Naive thymus-derived CD4-positive, alpha-beta T cell (primary cell): ENCODE measurements at regions of chr15 and their contacts with region 1.

Region 1: GRCh38 chr15:83268147-83268546 is 16.3 kb downstream of the BNC1 start:
- DNase-seq: no peak
- ATAC-seq: no peak
- H3K4me3 ChIP-seq: no peak overlapping the region
- H3K4me3 Mint-ChIP-seq: no peak overlapping the region
- H3K27ac ChIP-seq: no peak overlapping the region
- H3K27ac Mint-ChIP-seq: no peak overlapping the region
- H3K4me1 ChIP-seq: no peaks in the 10 kb centered on the region
- H3K4me1 Mint-ChIP-seq: no peaks in the 10 kb centered on the region
- H3K27me3 ChIP-seq: no peaks in the 10 kb centered on the region
- H3K27me3 Mint-ChIP-seq: peaks cover 11 to 45% (median 22%) of the 10 kb centered on the region in 5 donors

Region 2: GRCh38 chr15:82093774-82094211 is 1174.4 kb before region 1 on chr15:
- CTCF ChIA-PET with region 1: no interaction called
- POLR2A ChIA-PET with region 1: no interaction called
- intact Hi-C with region 1: loop called in 1 of 2 experiments (anchors 5 kb)
- DNase-seq: no peak
- ATAC-seq: no peak
- H3K4me3 ChIP-seq: no peak overlapping the region
- H3K4me3 Mint-ChIP-seq: no peak overlapping the region
- H3K27ac ChIP-seq: no peak overlapping the region
- H3K27ac Mint-ChIP-seq: no peak overlapping the region
- H3K4me1 ChIP-seq: no peaks in the 10 kb centered on the region
- H3K4me1 Mint-ChIP-seq: no peaks in the 10 kb centered on the region
- H3K27me3 ChIP-seq: no peaks in the 10 kb centered on the region
- H3K27me3 Mint-ChIP-seq: peaks cover 0 to 2% (median 0%) of the 10 kb centered on the region in 5 donors

Region 3: DNA sequence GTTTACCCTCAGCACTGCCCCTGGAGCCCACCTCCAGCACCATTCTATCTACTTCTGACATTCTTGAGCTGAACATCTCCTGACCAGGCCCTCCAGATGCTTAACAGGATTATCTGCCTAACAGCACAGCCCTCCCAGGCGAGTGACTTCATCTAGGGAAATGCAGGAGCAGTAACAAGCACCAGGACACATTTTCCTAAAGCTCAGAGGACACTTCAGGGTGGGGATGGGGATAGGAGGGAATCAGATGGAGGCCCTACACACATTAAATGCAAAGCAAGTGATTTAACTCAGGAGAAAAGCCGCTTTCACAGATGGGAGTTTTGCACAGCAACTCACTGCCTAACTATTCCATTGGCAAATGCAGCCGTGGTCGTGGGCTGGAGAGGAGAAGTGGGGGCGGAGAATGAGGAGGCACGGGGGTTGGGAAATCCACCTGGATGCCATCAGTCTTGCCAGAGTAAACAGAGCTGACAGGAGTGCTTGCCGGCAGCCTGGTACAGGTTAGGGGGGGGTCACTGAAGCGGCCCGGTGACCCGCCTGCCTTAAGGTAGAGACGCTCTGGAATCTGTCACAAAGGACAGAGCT is 37.7 kb after region 1 on chr15:
- CTCF ChIA-PET with region 1: no interaction called
- POLR2A ChIA-PET with region 1: no interaction called
- intact Hi-C with region 1: no loop called
- DNase-seq: no peak
- ATAC-seq: no peak
- H3K4me3 ChIP-seq: no peak overlapping the region
- H3K4me3 Mint-ChIP-seq: no peak overlapping the region
- H3K27ac ChIP-seq: no peak overlapping the region
- H3K27ac Mint-ChIP-seq: no peak overlapping the region
- H3K4me1 ChIP-seq: no peaks in the 10 kb centered on the region
- H3K4me1 Mint-ChIP-seq: peaks cover 0 to 2% (median 0%) of the 10 kb centered on the region in 7 donors
- H3K27me3 ChIP-seq: peaks cover 0 to 4% of the 10 kb centered on the region in 2 donors
- H3K27me3 Mint-ChIP-seq: peaks cover 22 to 45% (median 40%) of the 10 kb centered on the region in 5 donors